ENCODE measurements at regions of chr3 and their contacts with region 1.

Region 1: GRCh38 chr3:120095226-120095978 is 1.2 kb upstream of the GSK3B start:
- DNase-seq: peak; percentile 77 to 86 (median 83)
- H3K4me3 ChIP-seq: peak overlapping the region; percentile 86 to 99 (median 94)
- H3K4me3 Mint-ChIP-seq: peak overlapping the region in 1 of 2 donors; percentile 98
- H3K27ac ChIP-seq: peak overlapping the region; percentile 96 to 100
- H3K27ac Mint-ChIP-seq: no peak overlapping the region
- H3K4me1 ChIP-seq: peaks cover 20 to 39% of the 10 kb centered on the region in 2 donors
- H3K4me1 Mint-ChIP-seq: peaks cover 17% of the 10 kb centered on the region
- H3K27me3 ChIP-seq: no peaks in the 10 kb centered on the region
- H3K27me3 Mint-ChIP-seq: no peaks in the 10 kb centered on the region
- CTCF ChIP-seq: no peak

Region 2: GRCh38 chr3:119702530-119703157 is 392.8 kb before region 1 on chr3 and contains the start of gene CFAP91:
- intact Hi-C with region 1: loop called in 1 of 2 experiments (anchors 10 kb)
- DNase-seq: peak; percentile 94 to 98 (median 97)
- H3K4me3 ChIP-seq: peak within 1 kb of the TSS; percentile 15 to 70 (median 35)
- H3K4me3 Mint-ChIP-seq: peak within 1 kb of the TSS; percentile 66 to 82
- H3K27ac ChIP-seq: peak within 1 kb of the TSS; percentile 38 to 70
- H3K27ac Mint-ChIP-seq: peak within 1 kb of the TSS in 6 of 7 donors; percentile 26 to 88 (median 84)
- H3K4me1 ChIP-seq: peaks cover 32 to 34% of the 10 kb centered on the region in 2 donors
- H3K4me1 Mint-ChIP-seq: peaks cover 28% of the 10 kb centered on the region
- H3K27me3 ChIP-seq: peaks cover 4 to 6% of the 10 kb centered on the region in 2 donors
- H3K27me3 Mint-ChIP-seq: peaks cover 2 to 18% (median 6%) of the 10 kb centered on the region in 3 donors
- CTCF ChIP-seq: no peak
- polyA plus RNA-seq, gene CFAP91: 0.14 TPM in 1 of 3 donors, not detected in the others

Region 3: GRCh38 chr3:120348981-120349818 is 253.8 kb after region 1 on chr3 and contains the start of gene LRRC58:
- intact Hi-C with region 1: loop called in 1 of 2 experiments (anchors 10 kb)
- DNase-seq: peak; percentile 85 to 89 (median 87)
- H3K4me3 ChIP-seq: peak within 1 kb of the TSS; percentile 78 to 95 (median 88)
- H3K4me3 Mint-ChIP-seq: peak within 1 kb of the TSS; percentile 95
- H3K27ac ChIP-seq: peak within 1 kb of the TSS; percentile 67 to 89
- H3K27ac Mint-ChIP-seq: peak within 1 kb of the TSS; percentile 75 to 93 (median 89)
- H3K4me1 ChIP-seq: peaks cover 20 to 31% of the 10 kb centered on the region in 2 donors
- H3K4me1 Mint-ChIP-seq: peaks cover 51% of the 10 kb centered on the region
- H3K27me3 ChIP-seq: no peaks in the 10 kb centered on the region
- H3K27me3 Mint-ChIP-seq: peaks cover 0 to 2% (median 0%) of the 10 kb centered on the region in 3 donors
- CTCF ChIP-seq: no peak
- polyA plus RNA-seq, gene LRRC58: 6.5 to 12.4 (median 8.3) TPM

Region 4: GRCh38 chr3:120596116-120596852 is 500.9 kb after region 1 on chr3 and contains the start of gene NDUFB4:
- intact Hi-C with region 1: loop called in 1 of 2 experiments (anchors 10 kb)
- DNase-seq: peak; percentile 97 to 100 (median 99)
- H3K4me3 ChIP-seq: peak within 1 kb of the TSS; percentile 68 to 92 (median 86)
- H3K4me3 Mint-ChIP-seq: peak within 1 kb of the TSS; percentile 85 to 97
- H3K27ac ChIP-seq: peak within 1 kb of the TSS; percentile 73 to 96
- H3K27ac Mint-ChIP-seq: peak within 1 kb of the TSS; percentile 91 to 96 (median 94)
- H3K4me1 ChIP-seq: peaks cover 11 to 19% of the 10 kb centered on the region in 2 donors
- H3K4me1 Mint-ChIP-seq: peaks cover 26% of the 10 kb centered on the region
- H3K27me3 ChIP-seq: no peaks in the 10 kb centered on the region
- H3K27me3 Mint-ChIP-seq: peaks cover 1 to 3% (median 2%) of the 10 kb centered on the region in 3 donors
- CTCF ChIP-seq: no peak
- polyA plus RNA-seq, gene NDUFB4: 93.7 to 215 (median 173) TPM

Region 5: DNA sequence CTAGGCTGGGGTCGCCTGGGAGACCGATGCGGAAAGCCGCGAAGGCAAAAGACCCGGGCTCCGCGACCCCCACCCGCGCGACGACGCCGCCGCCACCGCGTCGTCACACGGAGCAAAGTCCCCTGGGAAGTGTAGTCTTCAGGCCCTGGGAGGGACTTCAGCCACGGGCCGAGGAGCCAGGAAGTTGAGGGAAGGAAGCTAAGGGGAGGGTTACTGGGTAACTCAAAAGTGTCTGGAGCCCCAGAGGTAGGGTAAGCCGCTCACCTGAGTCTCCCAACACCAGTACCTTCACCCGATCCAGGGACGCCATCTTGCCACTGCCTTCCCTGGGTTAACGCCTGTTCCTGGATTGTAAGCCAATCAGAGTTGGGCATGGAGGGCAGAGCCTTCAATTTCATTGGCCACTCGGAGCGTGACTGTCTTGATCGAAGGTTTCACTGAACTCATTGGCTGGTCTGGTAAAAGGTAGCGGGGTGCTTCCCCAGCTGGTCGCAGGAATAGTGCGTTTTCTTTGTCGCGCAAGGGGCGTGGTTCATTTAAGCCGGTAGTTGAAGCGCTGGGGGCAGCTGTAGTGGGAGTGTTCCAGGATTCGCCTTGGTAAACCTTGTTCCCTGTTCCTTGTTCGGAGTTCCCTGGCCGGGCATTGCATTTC is 646.9 kb after region 1 on chr3 and contains the starts of genes GTF2E1 and RABL3:
- intact Hi-C with region 1: loop called (anchors 10 kb)
- DNase-seq: peak; percentile 98 to 100 (median 99)
- H3K4me3 ChIP-seq: peak within 1 kb of the TSS; percentile 84 to 99 (median 99)
- H3K4me3 Mint-ChIP-seq: peak within 1 kb of the TSS; percentile 94 to 98
- H3K27ac ChIP-seq: peak within 1 kb of the TSS; percentile 80 to 100
- H3K27ac Mint-ChIP-seq: peak within 1 kb of the TSS; percentile 98 to 100 (median 99)
- H3K4me1 ChIP-seq: peaks cover 17 to 18% of the 10 kb centered on the region in 2 donors
- H3K4me1 Mint-ChIP-seq: peaks cover 21% of the 10 kb centered on the region
- H3K27me3 ChIP-seq: no peaks in the 10 kb centered on the region
- H3K27me3 Mint-ChIP-seq: peaks cover 0 to 2% (median 0%) of the 10 kb centered on the region in 3 donors
- CTCF ChIP-seq: no peak
- polyA plus RNA-seq, gene GTF2E1: 6.1 to 7.9 (median 6.9) TPM
- polyA plus RNA-seq, gene RABL3: 2.0 to 14.9 (median 11.5) TPM

Region 6: DNA sequence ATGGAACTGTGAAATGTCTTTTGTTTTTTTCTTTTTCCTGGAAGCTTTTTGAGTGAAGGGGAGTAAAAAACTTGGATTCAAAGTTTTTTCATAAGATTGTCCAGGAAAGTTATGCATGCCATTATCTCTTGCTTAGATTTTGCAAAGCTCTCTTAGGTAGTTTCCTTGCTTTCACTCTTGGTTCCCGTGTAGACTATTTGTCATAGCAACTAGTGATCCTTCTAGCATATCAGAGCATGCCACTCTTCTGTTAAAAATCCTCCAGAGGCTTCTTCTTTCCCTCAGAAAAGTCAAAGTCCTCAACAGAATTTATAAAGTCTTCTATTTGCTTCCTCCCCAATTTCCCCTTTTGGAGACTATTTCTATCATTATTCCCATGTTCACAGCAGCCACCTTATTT is 668.2 kb after region 1 on chr3:
- intact Hi-C with region 1: no loop called
- DNase-seq: no peak
- H3K4me3 ChIP-seq: no peak overlapping the region
- H3K4me3 Mint-ChIP-seq: no peak overlapping the region
- H3K27ac ChIP-seq: peak overlapping the region in 1 of 2 donors; percentile 11
- H3K27ac Mint-ChIP-seq: peak overlapping the region in 1 of 7 donors; percentile 19
- H3K4me1 ChIP-seq: no peaks in the 10 kb centered on the region
- H3K4me1 Mint-ChIP-seq: peaks cover 9% of the 10 kb centered on the region
- H3K27me3 ChIP-seq: no peaks in the 10 kb centered on the region
- H3K27me3 Mint-ChIP-seq: peaks cover 0 to 2% (median 0%) of the 10 kb centered on the region in 3 donors
- CTCF ChIP-seq: no peak